Cardiac septum (tissue), 1 donor: ENCODE measurements at regions of chr12 and their contacts with region 1.

Region 1: GRCh38 chr12:75390899-75391538 is at the start of gene GLIPR1L2:
- DNase-seq: peak; percentile 97
- total RNA-seq, gene GLIPR1L2: 2.7 TPM

Region 2: GRCh38 chr12:75480469-75480949 is 89.5 kb after region 1 on chr12 and contains the start of gene GLIPR1:
- intact Hi-C with region 1: loop called (anchors 10 kb)
- DNase-seq: peak; percentile 80
- total RNA-seq, gene GLIPR1: 7.8 TPM

Region 3: GRCh38 chr12:75528272-75528671 is 137.3 kb after region 1 on chr12:
- intact Hi-C with region 1: no loop called
- DNase-seq: no peak